ENCODE measurements at regions of chr11 and their contacts with region 1.

Region 1: GRCh38 chr11:33542921-33543320 is 157.7 kb downstream of the C11orf91 start:
- DNase-seq: peak in 1 of 2 donors; percentile 66
- ATAC-seq: peak; percentile 65

Region 2: DNA sequence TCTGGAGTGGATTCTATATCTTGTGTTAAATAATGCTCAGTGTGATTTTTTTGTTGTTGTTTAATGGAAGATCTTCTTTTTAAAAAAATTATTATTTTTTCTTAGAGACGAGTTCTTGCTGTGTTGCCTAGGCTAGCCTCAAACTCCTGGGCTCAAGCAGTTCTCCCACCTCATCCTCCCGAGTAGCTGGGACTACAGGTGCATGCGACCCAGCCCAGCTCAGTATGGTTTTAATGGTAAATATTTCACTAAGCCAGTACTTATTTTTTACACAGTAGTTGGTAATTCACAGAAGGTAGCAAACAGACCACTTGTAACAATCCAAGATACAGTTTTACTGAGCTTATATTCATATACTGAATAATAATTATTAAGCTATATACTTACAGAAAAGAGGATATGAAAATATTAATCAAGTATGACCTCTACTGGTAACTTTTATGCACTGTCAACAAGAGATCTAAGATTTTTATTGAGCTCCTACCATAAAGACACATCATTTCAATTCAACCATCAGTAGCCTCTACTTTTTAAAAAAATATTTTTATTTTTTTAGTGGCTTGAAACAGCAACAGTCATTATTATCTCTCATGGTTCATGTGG is 199.4 kb after region 1 on chr11:
- intact Hi-C with region 1: loop called in 1 of 2 experiments (anchors 10 kb)
- DNase-seq: no peak
- ATAC-seq: peak; percentile 70

Measured in left colon (tissue), 2 donors.